Cardiac septum (tissue), 1 donor: ENCODE measurements at regions of chrX and their contacts with region 1.

Region 1: DNA sequence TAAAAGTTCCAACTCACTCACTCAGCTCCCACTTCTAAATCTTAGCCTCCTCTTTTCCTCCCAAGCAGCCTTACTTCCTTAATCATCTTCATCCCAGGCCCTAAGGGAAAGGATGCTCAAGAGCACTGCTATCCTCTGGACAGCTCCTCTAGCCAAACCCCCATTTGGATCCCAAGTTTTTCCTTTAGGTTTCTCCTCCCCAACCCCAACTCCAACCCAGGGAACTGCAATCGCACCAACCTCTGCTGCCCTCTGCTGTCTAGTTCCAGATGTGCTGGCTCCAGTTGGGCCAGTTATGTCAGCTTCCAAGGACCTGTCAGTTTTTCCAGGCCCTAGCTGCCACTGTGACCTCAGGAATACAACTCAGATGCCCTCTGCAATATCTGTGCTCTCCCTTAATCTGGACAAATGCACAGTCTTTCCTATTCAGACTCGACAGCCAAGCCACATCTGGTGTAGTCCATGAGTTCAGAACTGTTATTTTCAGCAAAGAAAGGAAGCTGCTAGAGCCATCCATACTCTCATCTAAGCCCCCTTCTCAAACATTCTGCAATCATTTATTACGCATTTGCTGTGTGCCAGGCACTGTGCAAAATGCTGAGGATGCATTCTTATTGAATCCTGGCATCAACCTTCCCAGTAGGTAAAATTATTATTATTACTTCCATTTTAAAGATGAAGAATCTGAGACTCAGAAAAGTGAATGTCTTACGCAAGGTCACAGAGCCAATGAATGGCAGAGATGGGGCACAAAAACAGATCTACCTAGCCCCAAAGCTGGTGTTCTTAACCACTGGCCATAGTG is 12.3 kb upstream of the XPNPEP2 start:
- DNase-seq: peak; percentile 81

Region 2: DNA sequence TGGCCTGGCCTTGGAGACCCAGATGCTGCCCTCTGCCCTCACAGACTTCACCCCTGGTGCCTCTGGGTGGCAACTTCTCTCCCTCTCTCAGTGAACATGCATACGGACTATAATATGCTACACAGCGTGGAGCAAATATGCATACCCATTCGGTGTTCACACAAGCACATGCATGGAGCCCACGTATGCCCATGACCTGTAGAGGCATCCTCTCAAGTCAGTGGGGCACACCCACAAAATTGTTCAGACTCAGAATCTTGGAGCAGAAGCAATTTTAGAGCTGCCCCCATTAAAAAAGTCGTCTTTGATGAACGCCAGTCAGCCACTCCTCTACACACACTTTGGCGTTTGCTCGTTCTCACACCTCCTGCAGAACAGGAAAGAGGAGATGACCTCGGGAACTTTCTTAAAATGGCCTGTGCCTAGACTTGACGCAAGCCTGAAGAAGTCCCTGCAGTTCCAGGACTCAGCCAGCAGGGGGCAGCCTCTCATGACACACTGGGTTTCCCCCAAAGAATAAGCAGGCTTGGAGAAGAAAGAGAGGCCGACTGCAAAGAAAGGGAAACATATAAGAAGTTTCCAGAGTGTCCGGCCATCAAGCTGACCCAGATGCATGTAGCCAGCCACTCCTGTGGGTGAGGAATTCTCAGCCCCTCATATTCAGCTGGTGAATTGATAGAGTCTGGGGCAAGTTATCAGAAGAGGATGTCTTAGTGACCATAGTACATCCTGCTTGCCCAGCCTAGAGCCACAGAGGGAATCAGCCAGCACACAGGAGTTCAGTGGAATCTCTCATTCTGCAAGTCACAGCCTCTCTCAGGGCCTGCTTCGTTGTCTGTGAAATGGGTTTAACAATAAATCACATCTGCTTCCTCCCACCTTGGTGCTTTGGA is 89.0 kb before region 1 on chrX:
- intact Hi-C with region 1: loop called (anchors 1 kb)
- DNase-seq: no peak